CD8-positive, alpha-beta memory T cell (primary cell): ENCODE measurements at regions of chr1 and their contacts with region 1.

Region 1: GRCh38 chr1:66350001-66350547 is 183.9 kb upstream of the SGIP1 start:
- DNase-seq: peak; percentile 40 to 81 (median 75)
- H3K4me3 ChIP-seq: peak overlapping the region; percentile 8
- H3K4me3 Mint-ChIP-seq: peak overlapping the region; percentile 62 to 89 (median 77)
- H3K27ac ChIP-seq: peak overlapping the region; percentile 17
- H3K27ac Mint-ChIP-seq: peak overlapping the region; percentile 80 to 98 (median 95)
- H3K4me1 ChIP-seq: peaks cover 86% of the 10 kb centered on the region
- H3K4me1 Mint-ChIP-seq: peaks cover 85 to 100% (median 98%) of the 10 kb centered on the region in 3 donors
- H3K27me3 ChIP-seq: no peaks in the 10 kb centered on the region
- H3K27me3 Mint-ChIP-seq: no peaks in the 10 kb centered on the region

Region 2: DNA sequence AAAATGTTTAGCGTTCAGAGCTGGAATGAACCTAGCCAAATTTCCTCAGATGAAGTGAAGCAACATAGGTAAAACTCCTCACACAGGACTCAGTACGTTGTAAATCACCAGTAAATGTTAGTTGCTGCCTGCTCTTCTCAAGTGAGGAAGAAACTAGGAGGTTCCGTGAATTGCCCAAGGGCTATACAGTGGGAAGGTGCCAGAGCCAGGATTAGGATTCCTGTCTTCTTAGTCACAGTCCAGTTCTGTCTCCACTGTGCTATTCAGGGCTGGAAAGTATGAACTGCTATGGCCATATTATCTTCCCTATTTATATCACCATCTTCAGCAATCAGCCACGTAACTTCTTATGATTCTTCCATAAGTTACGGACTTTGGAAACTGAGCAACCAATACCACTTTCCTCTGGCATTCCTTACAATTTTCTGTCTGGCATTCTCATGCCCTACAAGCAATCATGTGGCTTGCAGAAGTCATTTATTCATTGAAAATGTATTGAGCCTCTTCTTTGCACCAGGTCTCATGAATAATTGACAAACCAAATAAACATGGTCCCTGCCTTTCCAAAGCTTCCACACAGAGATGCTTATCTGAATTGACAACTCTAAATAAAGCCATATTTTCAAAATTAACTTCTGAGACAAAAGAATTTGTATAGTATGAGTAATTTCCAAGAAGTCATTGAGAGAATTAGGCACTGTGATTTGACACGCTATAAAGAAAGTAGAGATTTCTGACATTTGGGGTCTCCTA is 87.7 kb before region 1 on chr1:
- CTCF ChIA-PET with region 1: no interaction called
- POLR2A ChIA-PET with region 1: no interaction called
- DNase-seq: no peak
- H3K4me3 ChIP-seq: no peak overlapping the region
- H3K4me3 Mint-ChIP-seq: no peak overlapping the region
- H3K27ac ChIP-seq: no peak overlapping the region
- H3K27ac Mint-ChIP-seq: no peak overlapping the region
- H3K4me1 ChIP-seq: peaks cover 13% of the 10 kb centered on the region
- H3K4me1 Mint-ChIP-seq: peaks cover 12 to 50% (median 24%) of the 10 kb centered on the region in 3 donors
- H3K27me3 ChIP-seq: no peaks in the 10 kb centered on the region
- H3K27me3 Mint-ChIP-seq: no peaks in the 10 kb centered on the region

Region 3: GRCh38 chr1:66331657-66332547 is 18.2 kb before region 1 on chr1:
- CTCF ChIA-PET with region 1: interaction called, 22 read pairs
- POLR2A ChIA-PET with region 1: interaction called, 13 read pairs
- DNase-seq: peak; percentile 19 to 58 (median 41)
- H3K4me3 ChIP-seq: peak overlapping the region; percentile 75
- H3K4me3 Mint-ChIP-seq: peak overlapping the region; percentile 91 to 100 (median 99)
- H3K27ac ChIP-seq: peak overlapping the region; percentile 87
- H3K27ac Mint-ChIP-seq: peak overlapping the region; percentile 90 to 100 (median 98)
- H3K4me1 ChIP-seq: peaks cover 39% of the 10 kb centered on the region
- H3K4me1 Mint-ChIP-seq: peaks cover 54 to 78% (median 62%) of the 10 kb centered on the region in 3 donors
- H3K27me3 ChIP-seq: no peaks in the 10 kb centered on the region
- H3K27me3 Mint-ChIP-seq: peaks cover 0 to 4% of the 10 kb centered on the region in 2 donors

Region 4: DNA sequence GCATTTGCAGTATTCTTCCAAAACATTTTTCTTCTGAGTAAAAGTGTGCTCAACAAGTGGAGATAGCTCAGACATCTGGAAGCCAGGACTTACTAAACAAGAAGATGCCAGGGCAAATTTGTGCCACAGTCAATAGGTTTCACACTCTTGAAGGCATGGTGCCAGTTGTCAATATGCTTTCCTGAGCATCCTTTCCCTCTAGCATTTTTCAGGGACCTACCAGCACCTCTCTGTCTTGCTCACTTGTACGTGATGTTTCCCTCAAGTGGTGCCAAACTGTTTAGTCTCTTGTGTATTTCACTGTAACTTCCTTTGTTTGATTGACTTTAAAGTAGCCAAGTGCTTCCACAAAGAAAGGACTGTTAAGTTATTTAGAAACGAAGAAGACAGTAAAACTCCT is 10.1 kb before region 1 on chr1:
- CTCF ChIA-PET with region 1: interaction called, 9 read pairs
- POLR2A ChIA-PET with region 1: interaction called, 13 read pairs
- DNase-seq: no peak
- H3K4me3 ChIP-seq: no peak overlapping the region
- H3K4me3 Mint-ChIP-seq: peak overlapping the region; percentile 62 to 81 (median 68)
- H3K27ac ChIP-seq: no peak overlapping the region
- H3K27ac Mint-ChIP-seq: peak overlapping the region; percentile 50 to 88 (median 86)
- H3K4me1 ChIP-seq: peaks cover 76% of the 10 kb centered on the region
- H3K4me1 Mint-ChIP-seq: peaks cover 76 to 93% (median 92%) of the 10 kb centered on the region in 3 donors
- H3K27me3 ChIP-seq: no peaks in the 10 kb centered on the region
- H3K27me3 Mint-ChIP-seq: no peaks in the 10 kb centered on the region

Region 5: DNA sequence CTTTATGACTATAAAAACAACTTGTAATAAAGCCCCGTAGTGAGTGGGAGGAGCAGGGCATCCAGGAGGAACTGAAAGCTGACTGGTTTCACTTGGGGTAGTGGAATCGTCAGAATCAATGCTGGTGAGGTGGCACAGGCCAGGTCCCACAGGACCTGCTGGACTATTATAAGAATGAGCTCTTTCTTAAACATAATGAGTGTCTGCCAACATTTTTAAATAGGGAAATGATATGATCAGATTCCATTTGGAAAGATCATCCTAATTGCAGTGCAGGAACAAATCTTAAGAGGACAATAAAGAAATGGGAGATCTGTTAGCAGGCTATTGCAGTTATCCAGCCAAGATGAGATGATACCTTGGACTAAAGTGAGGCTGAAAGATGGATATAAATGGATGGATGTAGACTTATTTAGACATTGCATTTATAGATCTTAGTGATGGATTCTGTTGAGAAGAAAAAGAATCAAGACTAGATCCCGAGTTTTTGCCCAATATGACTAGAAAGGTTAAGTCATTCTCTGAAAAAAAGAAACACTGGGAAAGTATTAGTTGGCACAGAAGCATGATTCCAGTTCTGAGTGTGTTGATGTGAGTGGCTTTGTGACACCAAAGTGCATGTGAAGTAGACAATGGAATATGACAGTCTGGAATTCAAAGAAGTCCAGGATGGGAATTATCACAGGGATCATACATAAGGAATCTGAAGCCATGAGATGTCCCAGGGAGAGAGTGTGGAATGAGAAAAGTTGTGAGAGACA is 30.6 kb after region 1 on chr1:
- CTCF ChIA-PET with region 1: no interaction called
- POLR2A ChIA-PET with region 1: no interaction called
- DNase-seq: no peak
- H3K4me3 ChIP-seq: no peak overlapping the region
- H3K4me3 Mint-ChIP-seq: peak overlapping the region in 5 of 7 donors; percentile 0 to 59 (median 44)
- H3K27ac ChIP-seq: no peak overlapping the region
- H3K27ac Mint-ChIP-seq: peak overlapping the region in 5 of 8 donors; percentile 4 to 52 (median 37)
- H3K4me1 ChIP-seq: peaks cover 10% of the 10 kb centered on the region
- H3K4me1 Mint-ChIP-seq: peaks cover 13 to 29% (median 26%) of the 10 kb centered on the region in 3 donors
- H3K27me3 ChIP-seq: no peaks in the 10 kb centered on the region
- H3K27me3 Mint-ChIP-seq: peaks cover 0 to 1% of the 10 kb centered on the region in 2 donors